Activated T-helper 1 cell treated with anti-CD3 and anti-CD28 coated beads, Interleukin-12 subunit alpha, Interleukin-12 subunit beta, Interleukin-2, Interleukin-4 antibody, amounts not matched to agents 30 ng/mL and 10 ng/mL and 1 ng/mL, durations not matched to agents 14 hours and 24 hours and 36 hours (primary cell): ENCODE measurements at regions of chr6 and their contacts with region 1.

Region 1: GRCh38 chr6:39102071-39102820 is 12.7 kb downstream of the SAYSD1 start:
- DNase-seq: no peak
- H3K4me3 Mint-ChIP-seq: no peak overlapping the region
- H3K27ac Mint-ChIP-seq: no peak overlapping the region
- H3K4me1 Mint-ChIP-seq: peaks cover 14% of the 10 kb centered on the region
- H3K27me3 Mint-ChIP-seq: peaks cover 6% of the 10 kb centered on the region

Region 2: DNA sequence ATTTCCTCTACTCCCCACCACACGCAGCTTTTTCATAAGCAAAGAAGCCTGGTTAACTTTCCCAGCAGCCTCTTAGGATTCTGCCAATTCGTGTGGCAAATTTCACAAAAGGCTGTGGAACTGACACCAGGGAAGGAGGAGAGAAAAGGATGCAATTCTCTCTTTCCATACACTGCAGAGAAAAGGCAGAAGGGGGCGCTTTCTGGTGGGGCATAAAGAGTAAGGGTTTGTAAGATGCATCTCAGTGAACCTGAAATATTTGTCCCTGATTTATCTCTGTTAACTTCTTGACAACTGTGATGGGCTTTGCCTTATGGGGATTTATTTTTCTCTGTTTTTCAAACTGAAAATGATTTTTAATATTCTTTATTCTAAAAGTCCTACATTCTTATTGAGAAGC is 99.2 kb before region 1 on chr6:
- intact Hi-C with region 1: loop called (anchors 10 kb)
- DNase-seq: no peak
- H3K4me3 Mint-ChIP-seq: no peak overlapping the region
- H3K27ac Mint-ChIP-seq: no peak overlapping the region
- H3K4me1 Mint-ChIP-seq: no peaks in the 10 kb centered on the region
- H3K27me3 Mint-ChIP-seq: peaks cover 41% of the 10 kb centered on the region